WTC11 (cell line): ENCODE measurements at regions of chr6 and their contacts with region 1.

Region 1: GRCh38 chr6:151014404-151015100 is 149.1 kb downstream of the MTHFD1L start:
- DNase-seq: peak; percentile 77
- ATAC-seq: peak; percentile 85
- H3K4me3 Mint-ChIP-seq: no peak overlapping the region
- H3K27ac Mint-ChIP-seq: peak overlapping the region; percentile 79
- H3K4me1 Mint-ChIP-seq: peaks cover 12% of the 10 kb centered on the region
- H3K27me3 Mint-ChIP-seq: no peaks in the 10 kb centered on the region
- CTCF ChIP-seq: peak; percentile 96

Region 2: DNA sequence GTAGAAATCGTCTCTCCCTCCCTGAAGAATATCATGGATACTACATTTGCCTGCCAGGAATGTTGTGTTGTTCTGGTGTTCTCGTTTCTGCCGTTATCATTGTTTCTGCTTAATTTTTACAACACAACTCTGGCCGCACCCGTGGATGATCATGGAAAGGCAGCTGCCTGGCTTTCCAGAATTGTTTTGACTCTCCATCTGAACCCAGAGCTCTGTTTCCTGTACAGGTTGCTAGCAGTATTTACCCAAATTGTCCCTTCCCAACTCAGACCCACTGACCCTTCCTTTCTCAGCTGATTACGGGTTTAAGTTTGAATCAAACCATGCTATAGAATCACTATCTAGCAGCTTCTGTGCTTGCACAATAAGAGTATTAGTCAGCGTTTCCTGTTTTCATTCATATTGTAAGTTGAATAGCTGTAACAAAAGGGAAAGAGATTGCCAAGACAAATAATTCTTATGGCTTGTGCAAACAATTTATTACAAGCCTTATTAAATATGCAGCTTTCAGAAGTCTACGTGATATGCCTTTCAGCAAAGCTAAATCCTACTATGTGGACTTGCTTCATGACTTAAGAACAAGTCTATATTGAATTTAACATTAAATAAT is 10.0 kb before region 1 on chr6:
- CTCF ChIA-PET with region 1: interaction called, 17 read pairs
- POLR2A ChIA-PET with region 1: no interaction called
- DNase-seq: no peak
- ATAC-seq: no peak
- H3K4me3 Mint-ChIP-seq: no peak overlapping the region
- H3K27ac Mint-ChIP-seq: peak overlapping the region; percentile 77
- H3K4me1 Mint-ChIP-seq: peaks cover 50% of the 10 kb centered on the region
- H3K27me3 Mint-ChIP-seq: no peaks in the 10 kb centered on the region
- CTCF ChIP-seq: no peak

Region 3: GRCh38 chr6:151027772-151028487 is 13.4 kb after region 1 on chr6:
- CTCF ChIA-PET with region 1: interaction called, 13 read pairs
- POLR2A ChIA-PET with region 1: no interaction called
- DNase-seq: no peak
- ATAC-seq: no peak
- H3K4me3 Mint-ChIP-seq: no peak overlapping the region
- H3K27ac Mint-ChIP-seq: no peak overlapping the region
- H3K4me1 Mint-ChIP-seq: 0 out of 2 replicates have a peak, but pooled peaks cover 3% of the 10 kb centered on the region
- H3K27me3 Mint-ChIP-seq: no peaks in the 10 kb centered on the region
- CTCF ChIP-seq: no peak

Region 4: GRCh38 chr6:151335930-151336329 is 321.4 kb after region 1 on chr6:
- CTCF ChIA-PET with region 1: interaction called, 49 read pairs
- POLR2A ChIA-PET with region 1: no interaction called
- DNase-seq: no peak
- ATAC-seq: no peak
- H3K4me3 Mint-ChIP-seq: no peak overlapping the region
- H3K27ac Mint-ChIP-seq: no peak overlapping the region
- H3K4me1 Mint-ChIP-seq: peaks cover 8% of the 10 kb centered on the region; the same call in 1 of the 2 replicates
- H3K27me3 Mint-ChIP-seq: no peaks in the 10 kb centered on the region; the same call in 1 of the 2 replicates
- CTCF ChIP-seq: no peak